ENCODE measurements at regions of chr20 and their contacts with region 1.

Region 1: GRCh38 chr20:51769976-51770615 is 1.9 kb upstream of the ATP9A start:
- DNase-seq: peak; percentile 29
- H3K4me3 ChIP-seq: no peak overlapping the region
- H3K27ac ChIP-seq: no peak overlapping the region
- H3K4me1 ChIP-seq: no peaks in the 10 kb centered on the region
- H3K27me3 ChIP-seq: no peaks in the 10 kb centered on the region

Region 2: GRCh38 chr20:51562332-51563155 is 207.6 kb before region 1 on chr20:
- in situ Hi-C with region 1: no loop called
- DNase-seq: peak; percentile 94
- H3K4me3 ChIP-seq: peak overlapping the region; percentile 81
- H3K27ac ChIP-seq: peak overlapping the region; percentile 62
- H3K4me1 ChIP-seq: peaks cover 36% of the 10 kb centered on the region
- H3K27me3 ChIP-seq: no peaks in the 10 kb centered on the region; the same call in 1 of the 2 replicates

Region 3: DNA sequence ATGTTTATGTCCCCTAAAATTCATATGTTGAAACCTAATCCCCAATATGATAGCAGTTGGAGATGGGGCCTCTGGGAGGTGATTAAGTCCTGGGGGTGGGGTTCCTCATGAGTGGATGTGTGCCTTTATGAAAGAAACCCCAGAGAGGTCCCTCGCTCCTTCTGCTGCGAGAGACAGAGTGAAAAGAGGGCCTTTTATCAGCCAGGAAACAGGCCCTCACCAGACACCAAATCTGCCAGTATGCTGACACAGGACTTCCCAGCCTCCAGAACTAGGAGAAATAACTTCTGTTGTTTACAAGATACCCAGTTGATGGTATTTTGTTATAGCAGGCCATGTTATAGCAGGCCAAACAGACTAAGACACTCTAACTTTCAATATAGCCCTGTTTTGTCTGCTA is 126.7 kb before region 1 on chr20:
- in situ Hi-C with region 1: loop called (anchors 10 kb)
- DNase-seq: no peak
- H3K4me3 ChIP-seq: no peak overlapping the region
- H3K27ac ChIP-seq: no peak overlapping the region
- H3K4me1 ChIP-seq: no peaks in the 10 kb centered on the region
- H3K27me3 ChIP-seq: no peaks in the 10 kb centered on the region

Region 4: DNA sequence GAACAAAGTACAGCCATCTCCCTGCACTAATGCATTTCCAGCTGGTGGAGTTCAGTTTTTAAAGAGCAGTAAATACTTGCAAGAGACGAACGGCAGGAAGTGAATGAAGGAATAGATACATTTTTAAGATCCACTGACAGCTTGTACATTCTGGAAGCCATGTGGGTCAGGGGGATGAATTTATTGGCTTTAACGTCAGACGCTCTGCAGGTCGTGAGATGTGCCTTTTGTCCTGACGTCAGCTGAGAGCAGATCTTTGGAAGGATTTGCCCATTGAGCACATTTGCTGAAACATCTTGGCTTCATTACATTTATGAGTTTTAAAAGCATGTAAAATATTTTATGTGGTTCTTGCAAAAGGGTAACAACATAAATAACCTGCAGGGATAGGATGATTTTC is 61.8 kb after region 1 on chr20:
- in situ Hi-C with region 1: loop called (anchors 10 kb)
- DNase-seq: no peak
- H3K4me3 ChIP-seq: no peak overlapping the region
- H3K27ac ChIP-seq: no peak overlapping the region
- H3K4me1 ChIP-seq: no peaks in the 10 kb centered on the region
- H3K27me3 ChIP-seq: peaks cover 3% of the 10 kb centered on the region

Region 5: GRCh38 chr20:52104546-52105441 is 334.7 kb after region 1 on chr20:
- in situ Hi-C with region 1: no loop called
- DNase-seq: peak; percentile 49
- H3K4me3 ChIP-seq: peak overlapping the region; percentile 73
- H3K27ac ChIP-seq: no peak overlapping the region
- H3K4me1 ChIP-seq: no peaks in the 10 kb centered on the region
- H3K27me3 ChIP-seq: no peaks in the 10 kb centered on the region